A549 (cell line): ENCODE measurements at regions of chr20 and their contacts with region 1.

Region 1: GRCh38 chr20:2431185-2431584 is 39.4 kb downstream of the SNRPB start:
- DNase-seq: no peak
- ATAC-seq: no peak
- H3K4me3 ChIP-seq: no peak overlapping the region
- H3K27ac ChIP-seq: no peak overlapping the region
- H3K4me1 ChIP-seq: no peaks in the 10 kb centered on the region
- CTCF ChIP-seq: no peak
- EP300 ChIP-seq: no peak
- POLR2A ChIP-seq: no peak
- RAD21 ChIP-seq: no peak

Region 2: GRCh38 chr20:2446845-2447244 is 15.7 kb after region 1 on chr20:
- CTCF ChIA-PET with region 1: interaction called, 65 read pairs
- POLR2A ChIA-PET with region 1: no interaction called
- DNase-seq: no peak
- ATAC-seq: no peak
- H3K4me3 ChIP-seq: no peak overlapping the region
- H3K27ac ChIP-seq: no peak overlapping the region
- H3K4me1 ChIP-seq: no peaks in the 10 kb centered on the region
- CTCF ChIP-seq: no peak
- EP300 ChIP-seq: no peak
- POLR2A ChIP-seq: no peak
- RAD21 ChIP-seq: no peak

Region 3: DNA sequence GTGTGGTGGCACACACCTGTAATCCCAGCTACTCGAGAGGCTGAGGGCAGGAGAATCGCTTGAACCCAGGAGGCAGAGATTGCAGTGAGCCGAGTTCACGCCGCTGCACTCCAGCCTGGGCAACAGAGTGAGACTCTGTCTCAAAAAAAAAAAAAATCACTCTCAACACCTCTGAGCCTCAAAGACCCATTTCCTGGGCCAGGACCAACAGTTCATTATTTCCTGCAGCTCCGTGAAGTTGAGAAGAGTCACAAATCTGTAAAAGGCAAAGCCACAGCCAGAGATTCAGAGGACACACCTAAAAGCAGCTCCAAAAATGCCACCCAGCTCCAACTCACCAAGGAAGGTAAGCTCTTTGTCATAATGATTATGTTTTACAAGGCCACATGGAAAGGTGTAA is 206.1 kb after region 1 on chr20:
- CTCF ChIA-PET with region 1: no interaction called
- POLR2A ChIA-PET with region 1: no interaction called
- DNase-seq: no peak
- ATAC-seq: no peak
- H3K4me3 ChIP-seq: no peak overlapping the region
- H3K27ac ChIP-seq: no peak overlapping the region
- H3K4me1 ChIP-seq: peaks cover 6% of the 10 kb centered on the region; the same call in 2 of the 3 replicates
- CTCF ChIP-seq: no peak
- EP300 ChIP-seq: no peak
- POLR2A ChIP-seq: no peak
- RAD21 ChIP-seq: no peak